A673 (cell line): ENCODE measurements at regions of chr16 and their contacts with region 1.

Region 1: DNA sequence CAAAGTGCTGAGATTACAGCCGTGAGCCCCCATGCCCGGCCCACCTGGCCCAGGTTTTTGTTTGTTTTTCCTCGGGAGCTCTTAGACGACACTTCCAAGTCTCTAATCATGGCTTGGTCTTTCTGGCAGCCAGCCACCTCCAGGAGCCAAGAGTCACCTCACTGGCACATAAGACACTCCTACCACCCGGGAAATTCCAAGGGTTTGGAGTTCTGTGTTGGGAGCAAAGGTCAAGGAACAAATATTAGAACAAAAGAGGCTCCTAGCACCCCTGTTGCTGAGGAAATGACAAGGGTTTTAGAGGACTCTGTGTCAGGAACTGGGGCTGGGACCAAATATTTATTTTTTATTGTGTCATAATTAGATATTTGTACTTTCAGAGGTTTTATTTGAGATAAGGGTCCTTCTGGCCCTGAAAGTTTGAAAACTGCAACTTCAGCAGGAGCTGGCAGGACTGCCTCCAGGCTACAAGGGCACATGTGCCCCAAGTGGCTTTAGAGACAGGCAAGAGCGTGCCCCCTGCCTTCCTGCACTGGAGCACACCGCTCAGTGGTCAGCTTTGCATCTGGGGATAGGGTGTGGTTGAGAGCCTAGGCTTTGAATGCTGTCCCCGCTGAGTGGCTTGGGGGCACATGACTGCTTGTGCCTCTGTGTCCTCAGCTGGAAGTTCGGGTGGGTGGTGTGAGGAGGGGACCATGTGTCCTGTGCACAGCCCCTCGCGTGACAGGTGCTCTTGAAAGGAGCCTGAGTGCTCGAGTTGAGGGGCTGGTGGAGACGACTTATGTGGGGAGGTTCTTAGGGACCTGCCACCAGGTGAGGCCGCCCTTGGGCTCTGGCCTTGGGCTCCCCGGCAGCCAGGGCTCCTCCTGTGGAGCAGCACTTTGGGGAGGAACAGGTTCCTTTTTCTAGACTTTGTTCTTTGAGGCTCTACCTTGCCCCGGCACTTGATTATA is 29.7 kb downstream of the MGRN1 start:
- DNase-seq: no peak
- H3K4me3 ChIP-seq: no peak overlapping the region
- H3K27ac ChIP-seq: no peak overlapping the region
- H3K4me1 ChIP-seq: no peaks in the 10 kb centered on the region
- H3K27me3 ChIP-seq: no peaks in the 10 kb centered on the region
- CTCF ChIP-seq: no peak

Region 2: GRCh38 chr16:4271176-4272066 is 382.9 kb before region 1 on chr16:
- CTCF ChIA-PET with region 1: interaction called, 11 read pairs
- POLR2A ChIA-PET with region 1: no interaction called
- intact Hi-C with region 1: no loop called
- DNase-seq: peak; percentile 96
- H3K4me3 ChIP-seq: peak overlapping the region; percentile 87
- H3K27ac ChIP-seq: peak overlapping the region; percentile 91
- H3K4me1 ChIP-seq: peaks cover 20% of the 10 kb centered on the region
- H3K27me3 ChIP-seq: no peaks in the 10 kb centered on the region
- CTCF ChIP-seq: no peak

Region 3: GRCh38 chr16:4611337-4612021 is 42.8 kb before region 1 on chr16:
- CTCF ChIA-PET with region 1: no interaction called
- POLR2A ChIA-PET with region 1: no interaction called
- intact Hi-C with region 1: no loop called
- DNase-seq: no peak
- H3K4me3 ChIP-seq: no peak overlapping the region
- H3K27ac ChIP-seq: no peak overlapping the region
- H3K4me1 ChIP-seq: peaks cover 20% of the 10 kb centered on the region
- H3K27me3 ChIP-seq: no peaks in the 10 kb centered on the region
- CTCF ChIP-seq: no peak

Region 4: DNA sequence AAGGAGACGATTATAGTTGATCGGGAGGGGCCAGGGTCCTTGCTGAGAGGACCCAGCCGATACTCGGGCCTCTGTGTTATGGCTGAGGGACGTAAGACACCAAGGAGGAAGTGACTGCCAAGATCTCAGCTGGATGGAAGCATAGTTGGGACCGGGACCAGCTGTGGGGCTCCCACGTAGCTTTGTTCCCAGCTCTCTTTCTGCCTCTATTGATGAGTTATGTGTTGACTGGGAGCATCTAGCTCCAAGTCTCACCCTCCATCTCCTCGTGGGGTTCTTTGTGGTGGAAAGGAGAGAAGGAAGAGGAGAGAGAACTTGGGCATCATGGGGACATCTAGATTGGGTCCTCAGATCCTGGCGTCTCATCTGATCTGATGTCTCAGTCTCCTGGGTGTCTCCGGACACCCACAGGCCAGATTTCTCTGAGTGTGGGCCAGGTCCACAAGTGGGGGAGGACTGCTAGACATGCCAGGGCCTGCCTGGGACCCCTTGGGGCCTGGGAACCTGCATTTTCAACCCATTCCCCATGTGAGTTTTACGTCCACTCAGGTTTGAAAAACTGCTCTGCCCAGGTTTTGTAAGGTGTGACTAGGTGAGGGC is 28.6 kb before region 1 on chr16:
- CTCF ChIA-PET with region 1: no interaction called
- POLR2A ChIA-PET with region 1: interaction called, 10 read pairs
- intact Hi-C with region 1: no loop called
- DNase-seq: peak; percentile 30
- H3K4me3 ChIP-seq: peak overlapping the region; percentile 99
- H3K27ac ChIP-seq: peak overlapping the region; percentile 92
- H3K4me1 ChIP-seq: peaks cover 6% of the 10 kb centered on the region
- H3K27me3 ChIP-seq: no peaks in the 10 kb centered on the region
- CTCF ChIP-seq: no peak

Region 5: GRCh38 chr16:5252791-5253190 is 598.5 kb after region 1 on chr16:
- CTCF ChIA-PET with region 1: no interaction called
- POLR2A ChIA-PET with region 1: no interaction called
- intact Hi-C with region 1: no loop called
- DNase-seq: no peak
- H3K4me3 ChIP-seq: no peak overlapping the region
- H3K27ac ChIP-seq: no peak overlapping the region
- H3K4me1 ChIP-seq: no peaks in the 10 kb centered on the region
- H3K27me3 ChIP-seq: peaks cover 9% of the 10 kb centered on the region
- CTCF ChIP-seq: no peak